AG04450 (cell line): ENCODE measurements at regions of chr2 and their contacts with region 1.

Region 1: GRCh38 chr2:236180831-236181453 is 12.8 kb upstream of the GBX2 start:
- DNase-seq: peak; percentile 33
- H3K4me3 ChIP-seq: no peak overlapping the region
- H3K27ac ChIP-seq: no peak overlapping the region
- H3K27me3 ChIP-seq: peaks cover 22% of the 10 kb centered on the region
- CTCF ChIP-seq: peak; percentile 78

Region 2: GRCh38 chr2:235766278-235766677 is 414.7 kb before region 1 on chr2:
- CTCF ChIA-PET with region 1: interaction called, 67 read pairs
- POLR2A ChIA-PET with region 1: interaction called, 4 read pairs
- DNase-seq: peak; percentile 57
- H3K4me3 ChIP-seq: no peak overlapping the region
- H3K27ac ChIP-seq: no peak overlapping the region
- H3K27me3 ChIP-seq: no peaks in the 10 kb centered on the region
- CTCF ChIP-seq: peak; percentile 87

Region 3: GRCh38 chr2:235779444-235779896 is 401.5 kb before region 1 on chr2:
- CTCF ChIA-PET with region 1: interaction called, 368 read pairs
- POLR2A ChIA-PET with region 1: no interaction called
- DNase-seq: peak; percentile 29
- H3K4me3 ChIP-seq: no peak overlapping the region
- H3K27ac ChIP-seq: no peak overlapping the region
- H3K27me3 ChIP-seq: no peaks in the 10 kb centered on the region
- CTCF ChIP-seq: peak; percentile 97

Region 4: DNA sequence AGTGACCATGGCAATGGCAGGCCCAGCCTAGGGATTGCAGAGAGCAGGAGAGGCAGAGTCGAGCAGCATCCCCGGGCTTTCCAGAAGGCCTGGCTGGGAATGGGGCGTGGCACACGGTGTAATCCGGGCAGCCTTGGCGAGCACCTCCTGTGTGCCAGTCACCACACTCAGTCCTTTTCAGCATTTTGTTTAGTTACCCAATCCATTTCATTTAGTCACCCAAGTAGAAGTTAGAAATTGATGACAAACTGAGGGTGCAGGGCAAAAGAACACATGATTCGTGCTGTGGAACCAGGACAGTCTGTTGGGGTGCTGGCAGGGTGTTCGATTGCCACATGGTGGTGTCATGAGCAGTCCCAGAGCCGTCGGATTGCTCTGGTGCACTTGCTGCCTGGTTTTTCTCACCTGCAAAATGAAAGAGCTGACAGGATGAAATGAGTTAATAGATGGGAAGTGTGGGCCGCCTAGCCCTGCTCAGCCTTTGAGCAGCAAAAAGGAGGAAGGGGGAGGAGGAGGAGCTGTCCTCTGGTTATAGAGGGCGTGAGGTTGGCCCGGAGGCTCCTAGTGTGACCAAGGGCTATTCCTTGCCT is 387.7 kb before region 1 on chr2:
- CTCF ChIA-PET with region 1: interaction called, 20 read pairs
- POLR2A ChIA-PET with region 1: no interaction called
- DNase-seq: no peak
- H3K4me3 ChIP-seq: no peak overlapping the region
- H3K27ac ChIP-seq: no peak overlapping the region
- H3K27me3 ChIP-seq: no peaks in the 10 kb centered on the region
- CTCF ChIP-seq: peak; percentile 40

Region 5: GRCh38 chr2:236131073-236131692 is 49.8 kb before region 1 on chr2:
- CTCF ChIA-PET with region 1: no interaction called
- POLR2A ChIA-PET with region 1: no interaction called
- DNase-seq: no peak
- H3K4me3 ChIP-seq: no peak overlapping the region
- H3K27ac ChIP-seq: no peak overlapping the region
- H3K27me3 ChIP-seq: no peaks in the 10 kb centered on the region
- CTCF ChIP-seq: no peak

Region 6: GRCh38 chr2:236162031-236162845 is 18.7 kb before region 1 on chr2:
- CTCF ChIA-PET with region 1: interaction called, 14 read pairs
- POLR2A ChIA-PET with region 1: no interaction called
- DNase-seq: no peak
- H3K4me3 ChIP-seq: no peak overlapping the region
- H3K27ac ChIP-seq: no peak overlapping the region
- H3K27me3 ChIP-seq: peaks cover 94% of the 10 kb centered on the region
- CTCF ChIP-seq: no peak

Region 7: DNA sequence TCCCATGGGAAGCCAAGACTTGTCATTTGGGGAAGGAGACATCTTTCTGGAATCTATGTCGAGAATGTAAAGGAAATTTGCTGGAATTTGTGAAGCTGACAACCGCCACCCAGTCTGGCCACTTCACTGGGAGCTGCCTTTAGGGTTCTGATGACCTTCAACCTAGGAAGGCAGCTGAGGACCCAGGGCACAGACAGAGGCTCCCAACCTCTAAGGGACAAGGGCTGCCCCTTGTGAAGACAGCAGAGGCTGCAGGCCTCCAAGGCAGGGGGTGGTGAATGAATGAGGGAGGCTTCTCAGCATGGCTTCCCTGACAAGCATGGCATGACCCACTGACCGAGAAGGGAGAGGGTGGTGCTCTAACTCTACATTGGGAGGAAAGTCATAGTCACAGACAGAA is 212.2 kb after region 1 on chr2:
- CTCF ChIA-PET with region 1: no interaction called
- POLR2A ChIA-PET with region 1: no interaction called
- DNase-seq: no peak
- H3K4me3 ChIP-seq: no peak overlapping the region
- H3K27ac ChIP-seq: no peak overlapping the region
- H3K27me3 ChIP-seq: no peaks in the 10 kb centered on the region
- CTCF ChIP-seq: no peak